Dorsolateral prefrontal cortex (tissue), 120 donors: ENCODE measurements at regions of chr11 and their contacts with region 1.

Region 1: DNA sequence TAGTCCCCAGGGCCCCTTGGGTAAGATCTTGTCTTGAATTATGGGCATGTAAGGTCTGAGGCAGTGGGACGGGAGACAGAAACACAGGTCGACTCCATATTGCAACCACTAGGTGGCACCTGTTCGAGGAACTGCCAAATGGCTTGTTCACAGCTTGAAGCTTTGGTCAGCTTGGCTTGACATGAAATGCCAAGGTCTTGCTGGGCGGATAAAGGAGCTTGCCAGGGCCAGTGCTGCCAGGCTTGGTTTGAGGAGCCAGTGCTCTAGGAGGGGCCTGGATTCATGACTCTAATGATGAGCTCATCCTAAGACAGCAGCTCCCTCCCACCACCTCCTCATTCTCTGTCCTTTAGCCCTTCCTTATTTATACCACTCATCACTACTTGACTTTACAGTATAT is 11.9 kb upstream of the NRIP3 start:
- DNase-seq: peak in 9 of 10 donors; percentile 55 to 95 (median 67)
- H3K4me3 ChIP-seq: no peak overlapping the region
- H3K27ac ChIP-seq: peak overlapping the region in 1 of 59 donors; percentile 51
- H3K27me3 ChIP-seq: no peaks in the 10 kb centered on the region
- CTCF ChIP-seq: peak in 55 of 56 donors; percentile 59 to 87 (median 77)

Region 2: DNA sequence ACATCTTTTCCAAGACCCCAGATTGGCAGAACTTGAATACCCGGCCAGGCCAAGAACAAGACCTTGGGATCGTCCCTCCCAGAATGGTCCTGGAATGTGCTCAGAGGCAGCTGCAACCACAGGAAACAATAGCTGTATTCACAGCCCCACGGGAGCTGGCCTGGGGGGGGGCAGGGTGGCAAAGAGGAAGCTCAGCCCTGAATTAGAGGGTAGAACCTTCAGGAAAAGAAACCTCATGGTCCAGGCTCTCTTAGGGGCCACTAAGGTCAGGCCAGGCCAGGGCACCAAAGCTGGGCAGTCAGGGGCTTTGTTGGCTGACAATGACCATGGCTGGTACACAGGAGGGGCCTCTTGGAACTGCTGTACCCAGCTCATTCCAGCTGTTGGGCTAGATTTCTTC is 315.8 kb before region 1 on chr11:
- intact Hi-C with region 1: loop called in 1 of 2 experiments (anchors 5 kb)
- DNase-seq: peak in 9 of 10 donors; percentile 43 to 83 (median 74)
- H3K4me3 ChIP-seq: no peak overlapping the region
- H3K27ac ChIP-seq: peak overlapping the region; percentile 26 to 99 (median 91)
- H3K27me3 ChIP-seq: no peaks in the 10 kb centered on the region
- CTCF ChIP-seq: no peak

Region 3: DNA sequence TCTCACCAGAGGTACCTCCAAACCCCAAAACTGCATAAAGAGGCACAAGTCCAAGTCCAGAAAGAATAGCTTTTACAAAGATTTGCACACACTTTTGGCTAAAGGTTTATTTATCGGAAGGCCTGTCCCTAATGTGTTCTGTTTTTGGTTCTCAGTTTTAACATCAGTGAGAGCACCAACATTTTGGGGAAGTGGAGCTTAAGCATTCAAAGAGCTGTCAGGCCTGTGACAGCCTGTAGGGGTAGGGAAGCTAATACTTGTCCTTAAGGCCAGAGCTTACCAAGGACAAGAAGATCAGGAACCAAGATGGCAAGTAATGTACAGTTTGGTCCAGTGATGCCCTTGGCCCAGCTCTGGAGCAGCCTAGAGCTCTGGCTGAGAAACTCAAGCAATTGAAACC is 114.6 kb after region 1 on chr11:
- intact Hi-C with region 1: loop called in 1 of 2 experiments (anchors 5 kb)
- DNase-seq: no peak
- H3K4me3 ChIP-seq: no peak overlapping the region
- H3K27ac ChIP-seq: peak overlapping the region in 1 of 59 donors; percentile 3
- H3K27me3 ChIP-seq: no peaks in the 10 kb centered on the region
- CTCF ChIP-seq: peak in 1 of 56 donors; percentile 7

Region 4: DNA sequence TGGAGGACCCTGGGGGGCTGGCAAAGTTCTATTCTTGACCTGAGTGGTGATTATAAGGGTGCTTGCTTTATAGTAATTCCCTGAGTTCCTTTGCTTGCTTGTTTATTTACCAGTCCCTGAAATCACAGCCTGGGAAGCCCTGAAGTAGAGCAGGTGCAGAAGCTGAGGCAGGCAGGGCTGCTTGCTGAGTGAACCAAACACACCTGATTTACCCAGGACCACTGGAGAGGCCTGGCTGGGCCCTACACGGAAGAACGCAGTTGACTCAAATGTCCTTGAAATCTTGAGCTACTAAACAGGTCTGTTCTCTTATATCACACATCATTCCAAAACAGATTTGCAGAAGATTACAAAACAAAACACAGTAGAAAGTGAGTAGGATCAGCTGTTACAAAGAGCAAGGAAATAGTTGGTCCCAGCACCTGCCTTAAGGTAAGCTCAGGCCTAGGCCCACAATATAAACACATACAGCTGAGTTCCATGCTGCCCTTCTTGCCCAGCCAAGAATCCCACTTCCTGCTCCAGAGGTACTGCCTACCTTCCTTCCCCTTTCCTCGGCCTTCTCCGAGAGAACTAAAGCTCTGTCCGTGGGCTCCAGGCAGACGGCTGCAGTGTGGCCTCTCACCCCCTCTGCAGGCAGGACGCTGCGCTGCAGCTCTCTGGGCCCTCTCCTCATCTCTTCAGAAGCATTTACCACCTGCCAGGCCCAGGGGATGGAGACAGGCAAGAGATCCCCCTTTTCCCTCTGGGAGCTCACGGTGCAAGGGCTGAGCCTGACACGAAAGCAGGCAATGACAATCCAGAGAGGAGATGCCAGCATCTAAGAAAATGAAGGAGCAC is 121.8 kb after region 1 on chr11:
- intact Hi-C with region 1: loop called (anchors 2 to 5 kb)
- DNase-seq: peak; percentile 67 to 85 (median 80)
- H3K4me3 ChIP-seq: no peak overlapping the region
- H3K27ac ChIP-seq: peak overlapping the region in 51 of 59 donors; percentile 12 to 82 (median 57)
- H3K27me3 ChIP-seq: no peaks in the 10 kb centered on the region
- CTCF ChIP-seq: peak; percentile 53 to 96 (median 88)

Region 5: GRCh38 chr11:9506489-9507276 is 491.0 kb after region 1 on chr11:
- intact Hi-C with region 1: loop called (anchors 2 to 10 kb)
- DNase-seq: peak in 9 of 10 donors; percentile 35 to 80 (median 64)
- H3K4me3 ChIP-seq: no peak overlapping the region
- H3K27ac ChIP-seq: no peak overlapping the region
- H3K27me3 ChIP-seq: no peaks in the 10 kb centered on the region
- CTCF ChIP-seq: peak; percentile 71 to 97 (median 90)